K562 (cell line): ENCODE measurements at regions of chr12 and their contacts with region 1.

Region 1: GRCh38 chr12:100273782-100274181 is 6.8 kb downstream of the SCYL2 start:
- DNase-seq: no peak
- ATAC-seq: peak; percentile 6; the same call in 1 of the 3 replicates
- H3K4me3 ChIP-seq: no peak overlapping the region
- H3K27ac ChIP-seq: peak overlapping the region; percentile 5; the same call in 1 of the 3 replicates
- H3K4me1 ChIP-seq: peaks cover 4 to 15% of the 10 kb centered on the region in 2 experiments; a peak in 3 of 5 replicates
- H3K27me3 ChIP-seq: no peaks in the 10 kb centered on the region
- CTCF ChIP-seq: no peak
- EP300 ChIP-seq: no peak
- POLR2A ChIP-seq: no peak
- RAD21 ChIP-seq: no peak

Region 2: GRCh38 chr12:101697197-101697929 is 1423.6 kb after region 1 on chr12 and contains the start of gene CHPT1:
- CTCF ChIA-PET with region 1: no interaction called
- POLR2A ChIA-PET with region 1: no interaction called
- in situ Hi-C with region 1: no loop called
- intact Hi-C with region 1: loop called (anchors 5 kb)
- DNase-seq: peak; percentile 93 to 96 (median 95)
- ATAC-seq: peak; percentile 81
- H3K4me3 ChIP-seq: peak within 1 kb of the TSS; percentile 87
- H3K27ac ChIP-seq: peak within 1 kb of the TSS; percentile 96
- H3K4me1 ChIP-seq: peaks cover 11 to 29% of the 10 kb centered on the region in 2 experiments
- H3K27me3 ChIP-seq: no peaks in the 10 kb centered on the region
- CTCF ChIP-seq: no peak
- EP300 ChIP-seq: peak; percentile 51
- POLR2A ChIP-seq: peak; percentile 73
- RAD21 ChIP-seq: no peak
- polyA plus RNA-seq, gene CHPT1: 15.3 to 24.3 TPM